Right ventricle myocardium inferior (tissue), 1 donor: ENCODE measurements at regions of chr15 and their contacts with region 1.

Region 1: DNA sequence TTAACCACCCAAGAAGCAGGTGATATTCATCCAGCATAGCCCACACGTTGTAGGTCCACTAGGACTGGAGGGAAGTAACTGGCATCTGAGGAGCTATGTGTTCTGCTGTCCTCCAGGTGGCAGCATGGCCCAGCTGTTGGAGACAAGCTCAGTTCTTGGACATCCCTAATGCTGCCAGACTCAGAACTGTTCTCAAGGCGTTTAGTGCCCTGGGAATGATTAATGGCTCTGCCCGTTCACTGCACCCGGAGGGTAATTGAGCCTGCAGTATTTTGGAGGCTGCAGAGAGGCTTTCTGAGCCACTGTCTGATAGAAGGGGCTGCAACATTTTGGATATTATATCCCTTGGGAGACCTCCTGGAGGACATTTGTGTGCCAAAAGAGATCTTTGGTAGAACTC is 521.2 kb upstream of the SEMA6D start:
- DNase-seq: peak; percentile 75
- ATAC-seq: peak; percentile 95

Region 2: DNA sequence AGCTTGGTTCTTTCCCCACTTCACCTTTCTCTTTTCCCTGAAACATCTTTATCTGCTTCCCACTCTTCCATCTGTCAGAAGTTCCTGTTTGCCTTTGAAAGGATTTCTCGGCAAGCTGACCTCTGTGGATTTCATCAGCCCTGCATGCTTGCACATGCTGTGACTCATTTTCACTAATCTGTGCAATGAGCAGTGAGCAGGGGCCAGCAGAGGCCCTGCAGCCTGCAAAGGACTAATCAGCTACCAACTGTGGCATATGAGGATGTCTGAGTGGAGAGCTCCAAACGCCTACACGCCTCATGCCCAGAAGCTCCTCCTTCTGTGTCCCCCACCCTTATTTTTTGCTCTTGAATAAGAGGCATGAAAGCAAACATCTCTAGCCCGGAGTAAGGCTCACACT is 188.3 kb after region 1 on chr15:
- intact Hi-C with region 1: no loop called
- DNase-seq: no peak
- ATAC-seq: peak; percentile 85

Region 3: DNA sequence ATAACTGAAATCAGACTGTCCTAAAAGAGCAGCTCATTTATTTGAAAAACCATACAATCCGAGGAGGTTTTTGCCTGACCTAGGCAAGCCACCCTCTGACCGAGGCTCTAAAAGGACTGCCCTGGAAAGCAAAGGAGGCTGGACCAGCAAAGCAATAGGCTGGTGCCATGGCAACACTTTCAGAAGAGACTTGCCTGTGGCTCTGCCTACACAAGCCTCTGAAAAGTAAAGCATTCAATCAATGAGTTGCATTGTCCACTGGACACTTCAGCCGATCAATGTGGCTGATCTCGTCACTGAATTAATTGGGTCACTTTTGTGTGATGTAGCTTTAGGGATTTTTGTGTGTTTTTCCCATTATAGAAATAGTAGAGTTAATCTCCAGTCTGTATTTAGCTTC is 422.2 kb after region 1 on chr15:
- intact Hi-C with region 1: loop called (anchors 10 kb)
- DNase-seq: no peak
- ATAC-seq: no peak

Region 4: GRCh38 chr15:47987908-47988532 is 792.0 kb after region 1 on chr15:
- intact Hi-C with region 1: loop called (anchors 2 kb)
- DNase-seq: no peak
- ATAC-seq: peak; percentile 84

Region 5: DNA sequence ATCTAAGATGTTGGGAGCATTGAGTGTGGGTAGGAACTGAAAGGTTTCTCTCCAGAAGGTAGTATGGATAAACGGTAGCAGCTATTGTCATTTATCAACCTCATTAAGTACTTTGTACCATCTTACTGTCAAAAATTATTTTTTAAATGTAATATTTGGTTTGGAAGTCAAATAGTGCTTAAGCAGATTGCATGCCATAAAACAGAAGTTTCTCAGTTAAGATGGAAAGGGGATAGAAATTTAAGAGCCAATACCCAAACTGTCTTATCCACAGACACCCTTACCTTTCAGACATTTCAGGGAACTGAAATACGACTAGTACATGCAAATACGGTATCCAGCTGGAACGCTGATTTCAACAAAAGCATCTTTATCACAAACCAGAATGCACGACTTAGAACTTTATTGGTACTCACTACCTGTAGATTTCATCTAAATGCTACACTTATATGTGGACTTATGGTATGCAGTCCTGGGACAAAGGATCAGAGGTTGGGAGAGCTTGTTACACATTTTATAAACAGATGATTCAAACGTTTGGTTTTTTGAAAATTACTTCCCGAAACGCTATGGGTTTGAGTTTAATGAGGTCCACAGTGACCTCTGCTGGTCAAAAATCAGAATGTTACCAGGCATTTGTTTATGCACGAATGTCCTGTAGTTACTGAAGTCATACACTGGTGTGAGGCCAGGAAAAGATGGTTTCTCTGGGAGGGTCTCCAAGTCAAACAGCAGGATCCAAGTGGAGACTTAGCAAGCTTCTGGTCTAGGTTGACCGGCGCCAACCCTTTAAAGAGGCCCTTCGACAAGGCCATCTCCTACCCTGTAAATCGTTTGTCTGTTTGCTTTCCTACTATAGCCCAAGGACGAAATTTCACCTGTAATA is 1089.5 kb after region 1 on chr15:
- intact Hi-C with region 1: loop called (anchors 10 kb)
- DNase-seq: no peak
- ATAC-seq: peak; percentile 60